Upper lobe of right lung (tissue), 1 donor: ENCODE measurements at regions of chr1 and their contacts with region 1.

Region 1: DNA sequence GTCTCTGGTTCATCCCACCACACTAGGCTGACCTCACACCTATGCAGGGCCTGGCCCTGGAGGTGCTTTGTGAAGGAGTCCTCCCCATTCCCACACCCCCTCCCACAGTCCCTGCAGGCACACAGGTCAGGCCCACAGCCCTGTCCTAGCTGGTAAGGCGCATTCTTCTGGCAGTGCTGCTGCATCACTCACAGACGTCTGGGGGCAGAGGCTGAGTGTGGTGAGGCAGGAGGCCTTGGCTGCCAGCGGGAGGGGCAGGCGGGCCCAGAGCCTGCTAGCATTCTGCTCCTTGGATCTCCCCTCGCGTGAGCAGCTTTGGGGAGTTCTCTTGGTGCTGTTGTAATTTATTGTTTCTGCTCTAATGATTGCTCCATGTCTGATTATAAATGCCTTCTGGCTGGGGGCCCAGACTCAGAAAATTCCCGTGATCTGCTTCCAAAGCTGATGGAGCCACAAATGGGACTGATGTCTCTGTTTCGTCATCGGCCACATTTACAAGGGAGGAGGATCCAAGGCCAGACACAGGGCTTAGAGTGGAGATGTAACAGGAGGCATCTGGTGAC is 62.9 kb downstream of the TRABD2B start:
- DNase-seq: peak; percentile 55
- ATAC-seq: peak; percentile 59
- H3K4me3 ChIP-seq: no peak overlapping the region
- H3K27ac ChIP-seq: no peak overlapping the region
- H3K4me1 ChIP-seq: peaks cover 6% of the 10 kb centered on the region
- H3K27me3 ChIP-seq: no peaks in the 10 kb centered on the region
- CTCF ChIP-seq: no peak

Region 2: DNA sequence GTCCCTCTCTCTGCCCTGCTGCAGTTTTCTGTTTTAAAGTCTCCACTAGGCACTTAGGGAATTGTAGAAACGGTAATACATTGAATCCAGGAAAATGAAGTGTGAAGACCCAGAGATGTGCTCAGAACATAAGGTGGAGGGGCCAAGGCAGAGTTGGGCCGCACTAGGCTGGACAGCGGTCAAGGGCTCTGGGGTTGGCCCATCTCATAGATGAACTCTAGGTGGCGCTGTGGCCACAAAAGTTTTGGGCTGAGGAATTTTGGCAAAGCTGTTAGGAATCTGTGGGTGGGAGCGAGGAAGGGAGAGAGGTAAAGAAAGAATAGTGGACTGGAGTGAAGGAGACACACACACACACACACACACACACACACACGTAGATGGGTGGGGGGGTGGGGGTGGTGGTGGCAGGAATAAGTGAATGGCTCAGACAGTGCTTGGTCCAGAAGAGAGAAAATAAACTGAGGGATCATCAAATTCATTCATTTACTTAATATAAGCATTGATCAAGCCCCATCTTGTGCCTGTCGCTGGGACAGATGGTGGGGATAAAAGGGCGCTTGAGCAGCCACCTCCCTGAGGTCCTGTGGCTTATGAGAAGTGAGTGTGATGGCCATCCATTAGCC is 195.7 kb before region 1 on chr1:
- intact Hi-C with region 1: loop called (anchors 10 kb)
- DNase-seq: no peak
- ATAC-seq: peak; percentile 91
- H3K4me3 ChIP-seq: no peak overlapping the region
- H3K27ac ChIP-seq: no peak overlapping the region
- H3K4me1 ChIP-seq: no peaks in the 10 kb centered on the region
- H3K27me3 ChIP-seq: peaks cover 9% of the 10 kb centered on the region
- CTCF ChIP-seq: peak; percentile 75

Region 3: DNA sequence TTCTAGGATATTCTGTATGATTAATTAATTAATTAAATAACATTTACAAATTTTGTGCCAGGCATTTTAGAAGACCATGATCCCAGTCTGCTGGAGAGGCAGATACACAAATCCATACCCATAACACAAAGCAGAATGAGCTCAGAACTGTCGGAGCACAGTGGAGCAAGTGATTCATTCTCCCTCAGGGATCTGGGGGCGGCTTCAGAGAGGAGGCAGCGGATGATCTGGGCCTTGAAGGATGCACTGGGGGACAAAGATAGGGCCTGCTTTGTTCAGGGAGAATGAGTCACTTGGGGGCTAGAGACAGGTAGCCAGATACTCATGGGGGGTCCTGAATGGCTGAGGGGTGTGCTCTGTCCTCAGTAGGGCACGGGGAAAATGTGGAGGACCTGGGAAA is 113.7 kb after region 1 on chr1:
- intact Hi-C with region 1: no loop called
- DNase-seq: no peak
- ATAC-seq: no peak
- H3K4me3 ChIP-seq: no peak overlapping the region
- H3K27ac ChIP-seq: no peak overlapping the region
- H3K4me1 ChIP-seq: peaks cover 7% of the 10 kb centered on the region
- H3K27me3 ChIP-seq: no peaks in the 10 kb centered on the region
- CTCF ChIP-seq: no peak